ENCODE measurements at regions of chr1 and their contacts with region 1.

Region 1: DNA sequence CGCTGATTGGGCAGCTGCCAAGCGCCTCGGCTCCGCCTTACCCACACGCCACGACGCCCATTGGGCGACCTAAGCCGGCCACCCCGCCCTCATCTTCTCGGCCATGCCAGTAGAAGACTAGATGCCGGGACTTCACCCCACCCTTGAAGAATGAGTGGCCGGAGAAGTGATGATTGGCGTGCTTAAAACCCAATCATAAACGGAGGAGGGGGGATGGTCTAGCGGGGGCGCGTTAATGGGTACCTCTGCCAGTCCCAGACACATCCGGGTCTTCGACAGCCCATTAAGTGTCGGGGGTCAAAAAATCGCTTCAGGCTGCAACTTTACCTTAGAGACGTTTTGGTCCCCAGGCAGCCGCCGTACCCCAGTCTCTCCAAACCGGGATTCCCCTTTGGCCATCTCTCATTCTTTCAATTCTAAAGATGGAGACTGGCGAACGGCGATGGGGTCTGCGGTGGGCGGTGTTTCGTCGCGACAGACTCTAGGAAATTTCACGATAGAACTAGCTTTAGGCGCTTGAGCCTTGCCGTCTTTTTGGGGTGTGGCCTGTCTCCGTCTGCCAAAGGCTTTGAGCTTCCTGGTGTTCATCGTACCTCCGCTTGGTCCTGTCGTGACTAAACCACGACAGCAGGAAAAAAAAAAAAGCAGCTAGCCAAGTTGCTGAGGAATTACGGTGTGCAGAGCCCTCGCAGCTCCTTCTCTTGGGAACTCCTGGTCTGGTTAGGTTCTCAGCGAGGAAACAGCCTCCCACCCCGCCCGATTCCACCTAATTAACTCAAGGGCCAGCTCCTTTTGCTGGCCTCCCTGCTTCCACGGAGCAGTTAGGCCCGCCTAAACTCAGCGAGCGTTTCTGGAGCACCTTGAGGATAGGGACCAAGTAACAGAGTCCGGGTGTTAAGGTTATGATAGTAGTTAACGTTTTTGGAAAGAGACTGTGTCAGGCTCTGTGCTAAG is at the start of gene GATAD2B:
- DNase-seq: peak; percentile 100
- H3K4me3 ChIP-seq: peak within 1 kb of the TSS; percentile 27 to 96 (median 96)
- H3K27ac ChIP-seq: peak within 1 kb of the TSS; percentile 91 to 92 (median 91)
- H3K4me1 ChIP-seq: peaks cover 17 to 32% of the 10 kb centered on the region in 2 donors
- H3K27me3 ChIP-seq: no peaks in the 10 kb centered on the region
- CTCF ChIP-seq: no peak
- POLR2A ChIP-seq: peak in 1 of 2 donors; percentile 67
- total RNA-seq, gene GATAD2B: 20.1 to 28.8 (median 21.5) TPM

Region 2: GRCh38 chr1:153553830-153554541 is 369.3 kb before region 1 on chr1:
- intact Hi-C with region 1: no loop called
- DNase-seq: peak; percentile 37 to 66
- H3K4me3 ChIP-seq: no peak overlapping the region
- H3K27ac ChIP-seq: peak overlapping the region; percentile 51 to 69 (median 61)
- H3K4me1 ChIP-seq: peaks cover 16 to 27% of the 10 kb centered on the region in 2 donors
- H3K27me3 ChIP-seq: no peaks in the 10 kb centered on the region
- CTCF ChIP-seq: no peak
- POLR2A ChIP-seq: no peak

Region 3: DNA sequence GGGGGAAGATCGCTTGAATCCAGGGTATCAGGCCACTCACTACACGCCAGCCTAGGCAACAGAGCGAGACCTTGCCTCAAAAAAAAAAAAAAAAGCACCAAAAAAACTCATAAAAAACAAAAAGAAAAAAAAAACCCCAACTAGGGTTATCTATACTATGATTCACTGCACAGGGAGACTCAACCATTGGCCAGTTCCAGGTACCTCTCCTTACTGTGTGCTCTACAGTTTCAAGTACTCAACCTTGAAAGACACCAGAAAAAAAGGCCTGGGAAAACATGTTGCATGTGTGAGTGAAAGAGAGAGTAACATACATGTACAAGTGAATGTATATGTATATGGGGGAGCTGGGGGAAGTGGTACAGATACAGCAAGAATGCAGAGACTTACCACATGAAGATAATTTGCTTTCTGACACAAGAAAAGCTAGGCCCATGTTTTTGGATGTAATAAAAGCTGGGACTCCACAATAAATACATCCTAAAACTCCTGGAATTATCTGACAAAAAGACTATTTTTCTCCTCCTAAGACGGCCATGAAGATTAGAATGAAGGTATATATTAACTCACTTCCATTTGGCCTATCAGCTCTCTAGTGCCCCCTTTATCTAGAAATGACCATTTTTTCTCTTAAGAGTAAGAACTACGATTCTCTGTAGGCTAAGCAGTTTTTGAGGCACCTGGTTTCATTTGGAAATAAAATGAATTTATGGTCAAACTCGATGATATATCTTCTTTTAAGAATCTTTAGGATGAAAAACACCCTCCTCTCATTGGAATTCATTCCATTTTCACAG is 95.9 kb before region 1 on chr1:
- intact Hi-C with region 1: loop called (anchors 5 kb)
- DNase-seq: no peak
- H3K4me3 ChIP-seq: no peak overlapping the region
- H3K27ac ChIP-seq: no peak overlapping the region
- H3K4me1 ChIP-seq: no peaks in the 10 kb centered on the region
- H3K27me3 ChIP-seq: no peaks in the 10 kb centered on the region
- CTCF ChIP-seq: no peak
- POLR2A ChIP-seq: no peak

Region 4: GRCh38 chr1:153958111-153958960 is 35.1 kb after region 1 on chr1 and contains the start of gene CRTC2:
- intact Hi-C with region 1: no loop called
- DNase-seq: peak; percentile 100
- H3K4me3 ChIP-seq: peak within 1 kb of the TSS; percentile 65 to 89 (median 83)
- H3K27ac ChIP-seq: peak within 1 kb of the TSS; percentile 78 to 88 (median 84)
- H3K4me1 ChIP-seq: peaks cover 34 to 39% of the 10 kb centered on the region in 2 donors
- H3K27me3 ChIP-seq: no peaks in the 10 kb centered on the region
- CTCF ChIP-seq: no peak
- POLR2A ChIP-seq: peak; percentile 5 to 76
- total RNA-seq, gene CRTC2: 11.4 to 22.5 (median 18.1) TPM

Measured in thyroid gland (tissue), 4 donors.